ENCODE measurements at regions of chr2 and their contacts with region 1.

Region 1: DNA sequence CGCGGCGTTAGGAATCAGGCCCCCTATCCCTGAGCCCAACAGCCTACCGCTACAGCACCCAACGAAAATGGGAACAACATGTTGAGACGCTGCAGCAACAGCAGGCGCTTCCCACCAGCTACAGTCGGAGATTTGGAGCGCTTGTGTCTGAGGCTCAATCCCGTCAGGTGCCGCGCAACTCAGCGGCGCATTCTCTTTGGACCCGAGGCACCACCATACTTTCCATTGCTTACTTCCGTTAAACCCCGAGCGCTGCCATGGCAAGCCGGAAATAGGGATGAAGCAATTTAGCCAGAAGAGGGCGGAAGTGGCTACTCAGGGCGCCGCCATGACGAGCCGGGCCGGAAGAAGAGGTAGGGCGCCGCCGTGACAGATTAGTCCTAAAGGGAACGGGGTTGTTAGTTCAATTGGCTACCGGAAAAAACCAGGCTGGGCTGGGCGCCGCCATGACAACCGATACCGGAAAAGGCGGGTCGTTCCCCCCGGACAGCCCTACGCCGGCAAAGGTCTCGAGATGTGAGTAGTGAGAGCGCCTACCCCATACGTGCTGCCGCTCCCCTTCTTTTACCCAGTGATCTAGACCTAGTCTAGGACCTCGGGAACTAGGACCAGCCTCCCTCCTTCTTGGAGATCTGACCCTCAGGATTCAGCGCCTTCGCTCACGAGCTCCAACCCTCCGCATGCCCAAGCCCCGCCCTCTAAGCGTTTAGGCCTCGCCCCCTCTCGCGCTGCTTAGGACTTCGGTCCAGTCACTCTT is at the start of gene CHCHD5:
- DNase-seq: peak; percentile 86 to 90
- H3K4me3 ChIP-seq: peak within 1 kb of the TSS; percentile 91
- H3K27ac ChIP-seq: peak within 1 kb of the TSS; percentile 92
- H3K4me1 ChIP-seq: peaks cover 24% of the 10 kb centered on the region
- H3K27me3 ChIP-seq: no peaks in the 10 kb centered on the region
- CTCF ChIP-seq: no peak; the same call in 1 of the 2 replicates
- total RNA-seq, gene CHCHD5: 38.4 and 64.3 TPM in 2 replicates

Region 2: DNA sequence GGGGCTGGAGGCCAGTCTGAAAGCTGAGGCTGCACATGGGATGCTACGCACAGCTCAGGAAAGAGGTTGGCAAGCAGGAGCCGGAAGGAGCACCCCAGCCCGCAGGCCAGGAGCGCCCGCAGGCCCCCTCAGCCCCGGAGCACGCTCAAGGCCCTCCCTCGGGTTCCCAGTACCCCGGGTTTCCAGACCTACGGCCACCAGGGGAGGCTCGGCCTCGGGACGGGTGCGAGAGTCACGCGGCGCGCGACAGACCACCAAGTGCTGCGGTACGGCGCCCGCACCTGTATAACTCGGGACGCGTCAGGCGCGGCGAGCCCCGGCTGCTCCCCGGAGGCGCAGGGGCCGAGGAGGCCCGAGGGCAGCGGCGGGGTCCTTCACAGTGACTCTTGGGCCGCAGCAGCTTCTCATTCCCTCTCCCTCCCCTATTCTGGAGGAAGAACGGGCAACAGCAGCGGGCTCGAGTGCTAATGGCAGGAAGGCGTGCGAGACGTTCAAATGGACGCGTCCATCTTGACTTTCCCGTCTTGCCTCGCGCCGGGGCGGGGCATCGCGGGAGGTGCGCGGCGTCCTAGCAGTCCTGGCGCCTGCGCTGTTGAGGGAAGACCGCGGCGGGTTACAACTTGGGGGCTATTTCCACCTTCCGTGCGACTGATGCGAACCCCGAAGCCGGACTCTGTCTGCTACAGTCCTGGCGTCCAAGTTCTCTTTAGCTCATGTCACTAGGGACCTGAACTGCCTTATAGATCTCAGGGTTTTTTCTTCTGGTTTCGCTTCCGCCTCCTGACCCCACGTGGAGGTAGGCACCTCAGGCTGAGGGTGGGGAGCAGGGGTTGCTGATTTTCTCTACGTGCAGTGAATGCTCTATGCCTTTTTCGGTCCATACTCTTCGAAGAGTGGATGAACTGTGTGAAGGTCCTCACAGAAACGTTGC is 700.4 kb before region 1 on chr2 and contains the start of gene ANAPC1:
- CTCF ChIA-PET with region 1: no interaction called
- POLR2A ChIA-PET with region 1: no interaction called
- intact Hi-C with region 1: loop called (anchors 5 kb)
- DNase-seq: peak; percentile 73 to 80
- H3K4me3 ChIP-seq: peak within 1 kb of the TSS; percentile 73
- H3K27ac ChIP-seq: peak within 1 kb of the TSS; percentile 72
- H3K4me1 ChIP-seq: peaks cover 15% of the 10 kb centered on the region
- H3K27me3 ChIP-seq: no peaks in the 10 kb centered on the region
- CTCF ChIP-seq: no peak; the same call in 1 of the 2 replicates
- total RNA-seq, gene ANAPC1: 59.6 and 65.1 TPM in 2 replicates

Region 3: GRCh38 chr2:112048887-112049286 is 535.4 kb before region 1 on chr2:
- CTCF ChIA-PET with region 1: no interaction called
- POLR2A ChIA-PET with region 1: no interaction called
- intact Hi-C with region 1: loop called (anchors 2 kb)
- DNase-seq: peak; percentile 33 to 68
- H3K4me3 ChIP-seq: no peak overlapping the region
- H3K27ac ChIP-seq: no peak overlapping the region
- H3K4me1 ChIP-seq: peaks cover 7% of the 10 kb centered on the region
- H3K27me3 ChIP-seq: no peaks in the 10 kb centered on the region
- CTCF ChIP-seq: peak; percentile 89

Region 4: GRCh38 chr2:112054847-112055729 is 529.2 kb before region 1 on chr2 and contains the start of gene TMEM87B:
- CTCF ChIA-PET with region 1: no interaction called
- POLR2A ChIA-PET with region 1: interaction called, 4 read pairs
- intact Hi-C with region 1: loop called (anchors 1 kb)
- DNase-seq: peak; percentile 82 to 96
- H3K4me3 ChIP-seq: peak within 1 kb of the TSS; percentile 87
- H3K27ac ChIP-seq: peak within 1 kb of the TSS; percentile 71
- H3K4me1 ChIP-seq: peaks cover 30% of the 10 kb centered on the region
- H3K27me3 ChIP-seq: no peaks in the 10 kb centered on the region
- CTCF ChIP-seq: no peak
- total RNA-seq, gene TMEM87B: 20.1 and 24.4 TPM in 2 replicates

Region 5: DNA sequence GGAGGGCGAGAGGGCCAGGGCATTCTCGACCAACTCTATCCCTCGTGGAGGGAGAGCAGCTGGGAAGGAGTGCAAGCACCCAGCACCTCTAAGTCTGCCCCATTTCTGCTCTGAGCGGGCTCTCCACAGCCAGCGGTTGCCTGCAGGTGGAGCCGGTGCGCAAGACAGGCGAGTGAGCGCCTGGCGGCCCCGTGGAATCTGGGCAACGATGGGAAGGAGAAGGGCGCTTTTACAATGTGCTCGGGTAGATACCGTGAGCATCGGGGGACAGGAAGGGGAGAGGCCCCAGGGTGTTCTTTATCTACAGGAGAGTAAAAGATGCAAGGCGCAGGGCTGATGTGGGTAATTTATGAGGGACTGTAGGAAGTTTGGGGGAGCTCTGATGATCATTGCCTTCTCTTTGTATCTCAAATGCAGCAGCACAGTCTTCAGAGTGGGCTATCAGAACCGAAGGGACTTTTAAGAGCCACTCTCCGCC is 103.2 kb before region 1 on chr2:
- CTCF ChIA-PET with region 1: no interaction called
- POLR2A ChIA-PET with region 1: no interaction called
- intact Hi-C with region 1: loop called (anchors 2 kb)
- DNase-seq: peak; percentile 74 to 77
- H3K4me3 ChIP-seq: peak overlapping the region; percentile 74
- H3K27ac ChIP-seq: peak overlapping the region; percentile 28; the same call in 1 of the 2 replicates
- H3K4me1 ChIP-seq: peaks cover 15% of the 10 kb centered on the region
- H3K27me3 ChIP-seq: no peaks in the 10 kb centered on the region
- CTCF ChIP-seq: peak; percentile 62

Region 6: GRCh38 chr2:112493048-112493447 is 91.3 kb before region 1 on chr2:
- CTCF ChIA-PET with region 1: no interaction called
- POLR2A ChIA-PET with region 1: interaction called, 16 read pairs
- intact Hi-C with region 1: no loop called
- DNase-seq: no peak
- H3K4me3 ChIP-seq: no peak overlapping the region
- H3K27ac ChIP-seq: no peak overlapping the region
- H3K4me1 ChIP-seq: peaks cover 14% of the 10 kb centered on the region
- H3K27me3 ChIP-seq: no peaks in the 10 kb centered on the region
- CTCF ChIP-seq: no peak

Region 7: DNA sequence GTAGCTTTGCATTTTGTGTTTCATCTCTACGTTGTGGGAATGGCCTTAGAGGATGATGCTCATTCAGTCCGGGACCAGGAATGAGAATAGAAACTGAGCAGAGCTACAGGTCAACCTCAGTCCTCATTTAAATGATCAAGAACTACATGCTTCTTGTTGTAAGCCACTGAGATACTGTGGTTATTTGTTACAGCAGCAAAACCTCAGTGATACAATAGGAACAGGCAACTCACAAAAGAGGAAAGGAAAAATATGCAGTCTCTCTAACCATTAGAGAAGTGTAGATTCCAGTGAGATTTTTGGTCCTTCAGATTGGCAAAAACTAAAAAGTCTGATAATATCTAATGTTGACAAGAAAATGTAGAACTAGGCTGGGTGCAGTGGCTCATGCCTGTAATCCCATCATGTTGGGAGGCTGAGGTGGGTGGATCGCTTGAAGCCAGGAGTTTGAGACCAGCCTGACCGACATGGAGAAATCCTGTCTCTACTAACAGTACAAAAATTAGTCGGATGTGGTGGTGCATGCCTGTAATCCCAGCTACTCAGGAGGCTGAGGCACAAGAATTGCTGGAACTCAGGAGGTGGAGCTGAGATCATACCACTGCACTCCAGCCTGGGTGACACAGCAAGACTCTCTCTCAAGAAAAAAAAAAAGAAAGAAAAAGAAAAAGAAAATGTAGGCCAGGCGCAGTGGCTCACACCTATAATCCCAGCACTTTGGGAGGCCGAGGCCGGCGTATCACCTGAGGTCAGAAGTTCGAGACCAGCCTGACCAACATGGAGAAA is 13.4 kb after region 1 on chr2:
- CTCF ChIA-PET with region 1: no interaction called
- POLR2A ChIA-PET with region 1: no interaction called
- intact Hi-C with region 1: no loop called
- DNase-seq: no peak
- H3K4me3 ChIP-seq: no peak overlapping the region
- H3K27ac ChIP-seq: no peak overlapping the region
- H3K4me1 ChIP-seq: peaks cover 23% of the 10 kb centered on the region
- H3K27me3 ChIP-seq: no peaks in the 10 kb centered on the region
- CTCF ChIP-seq: no peak

Region 8: DNA sequence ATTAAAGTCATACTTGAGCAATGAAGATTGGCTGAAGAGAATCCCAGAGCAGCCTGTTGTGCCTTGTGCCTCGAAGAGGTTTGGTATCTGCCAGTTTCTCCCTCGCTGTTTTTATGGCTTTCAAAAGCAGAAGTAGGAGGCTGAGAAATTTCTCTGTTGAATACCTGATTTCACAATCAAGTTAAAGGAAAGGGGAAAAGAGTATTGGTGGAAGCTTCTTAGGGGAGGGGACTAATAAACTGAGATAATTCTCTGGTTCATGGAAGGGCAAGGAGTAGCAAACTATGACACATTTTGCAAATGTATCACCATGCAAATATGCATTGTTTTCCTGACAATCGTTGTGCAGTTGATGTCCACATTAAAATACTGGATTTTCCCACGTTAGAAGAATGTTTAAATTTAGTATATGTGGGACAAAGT is 252.4 kb after region 1 on chr2 and contains the start of gene IL1B:
- CTCF ChIA-PET with region 1: no interaction called
- POLR2A ChIA-PET with region 1: no interaction called
- intact Hi-C with region 1: no loop called
- DNase-seq: peak; percentile 30 to 93
- H3K4me3 ChIP-seq: peak within 1 kb of the TSS; percentile 41
- H3K27ac ChIP-seq: peak within 1 kb of the TSS; percentile 93
- H3K4me1 ChIP-seq: peaks cover 47% of the 10 kb centered on the region
- H3K27me3 ChIP-seq: no peaks in the 10 kb centered on the region
- CTCF ChIP-seq: no peak
- total RNA-seq, gene IL1B: 1.4 TPM in 2 replicates

Measured in PC-9 (cell line).